Mammary epithelial cell (primary cell): ENCODE measurements at regions of chr12 and their contacts with region 1.

Region 1: GRCh38 chr12:29782285-29782870 is 1.4 kb downstream of the TMTC1 start:
- DNase-seq: peak; percentile 77
- H3K4me3 ChIP-seq: peak overlapping the region; percentile 77 to 95 (median 92)
- H3K27ac ChIP-seq: peak overlapping the region; percentile 90
- H3K4me1 ChIP-seq: peaks cover 6% of the 10 kb centered on the region
- H3K27me3 ChIP-seq: no peaks in the 10 kb centered on the region
- CTCF ChIP-seq: no peak

Region 2: DNA sequence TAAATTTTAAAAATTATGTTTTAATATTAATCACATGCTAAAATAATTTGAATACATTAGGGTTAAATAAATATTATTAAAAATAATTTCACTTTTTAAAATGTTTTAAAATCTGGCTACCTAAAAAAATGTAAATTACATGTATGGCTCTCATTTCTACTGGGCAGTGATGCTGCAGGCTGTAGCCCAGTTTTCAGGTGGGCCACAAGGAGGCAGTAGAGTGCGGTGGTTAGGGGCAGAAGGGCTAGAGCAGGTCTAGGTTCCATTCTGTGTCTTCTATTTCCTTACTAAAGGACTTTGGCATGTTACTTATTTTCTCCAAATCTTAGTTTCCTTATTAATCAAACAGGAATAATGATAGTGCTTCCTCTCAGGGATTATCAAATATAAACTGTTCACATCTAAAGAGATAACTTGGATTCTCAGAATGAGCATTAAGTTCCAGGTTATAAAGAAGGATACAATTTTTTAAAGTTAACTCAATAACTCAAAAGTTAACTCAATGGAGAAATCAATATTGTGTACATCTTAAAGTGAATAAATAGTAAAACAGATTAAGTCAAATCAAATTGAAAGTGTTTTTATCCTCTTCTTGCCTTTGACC is 230.0 kb before region 1 on chr12:
- CTCF ChIA-PET with region 1: no interaction called
- dilution Hi-C with region 1: no loop called
- in situ Hi-C with region 1: no loop called
- intact Hi-C with region 1: loop called (anchors 1 kb)
- DNase-seq: peak; percentile 30
- H3K4me3 ChIP-seq: no peak overlapping the region
- H3K27ac ChIP-seq: no peak overlapping the region
- H3K4me1 ChIP-seq: no peaks in the 10 kb centered on the region
- H3K27me3 ChIP-seq: no peaks in the 10 kb centered on the region
- CTCF ChIP-seq: peak; percentile 88 to 97

Region 3: GRCh38 chr12:29616664-29617409 is 165.5 kb before region 1 on chr12:
- CTCF ChIA-PET with region 1: interaction called, 5 read pairs
- dilution Hi-C with region 1: no loop called
- in situ Hi-C with region 1: no loop called
- intact Hi-C with region 1: loop called (anchors 5 kb)
- DNase-seq: peak; percentile 92
- H3K4me3 ChIP-seq: no peak overlapping the region
- H3K27ac ChIP-seq: peak overlapping the region; percentile 96
- H3K4me1 ChIP-seq: peaks cover 16% of the 10 kb centered on the region
- H3K27me3 ChIP-seq: no peaks in the 10 kb centered on the region
- CTCF ChIP-seq: no peak

Region 4: GRCh38 chr12:29713744-29714143 is 68.6 kb before region 1 on chr12:
- CTCF ChIA-PET with region 1: no interaction called
- dilution Hi-C with region 1: no loop called
- in situ Hi-C with region 1: no loop called
- intact Hi-C with region 1: loop called (anchors 2 kb)
- DNase-seq: peak; percentile 24
- H3K4me3 ChIP-seq: no peak overlapping the region
- H3K27ac ChIP-seq: peak overlapping the region; percentile 81
- H3K4me1 ChIP-seq: peaks cover 30% of the 10 kb centered on the region
- H3K27me3 ChIP-seq: no peaks in the 10 kb centered on the region
- CTCF ChIP-seq: no peak

Region 5: DNA sequence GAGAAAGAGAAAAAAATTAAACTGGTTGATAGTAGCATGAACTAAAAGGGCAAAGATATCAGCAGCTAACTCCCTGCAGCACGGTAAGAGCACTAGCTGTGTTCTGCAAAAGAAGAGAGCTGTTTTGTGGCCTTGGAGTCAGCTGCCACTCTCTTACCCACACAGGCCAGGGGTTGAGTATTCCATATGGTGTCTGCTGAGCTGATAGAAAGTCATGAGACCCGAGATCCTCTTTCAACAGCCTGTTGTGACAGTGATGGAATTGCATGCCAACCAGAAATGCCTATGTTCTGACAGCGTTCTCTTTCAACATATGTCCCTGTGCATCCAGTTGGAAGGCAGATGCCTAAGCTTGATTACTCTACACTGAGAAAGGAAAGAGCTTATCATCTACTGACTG is 38.6 kb before region 1 on chr12:
- CTCF ChIA-PET with region 1: no interaction called
- dilution Hi-C with region 1: no loop called
- in situ Hi-C with region 1: no loop called
- intact Hi-C with region 1: loop called (anchors 1 kb)
- DNase-seq: peak; percentile 79
- H3K4me3 ChIP-seq: no peak overlapping the region
- H3K27ac ChIP-seq: peak overlapping the region; percentile 94
- H3K4me1 ChIP-seq: peaks cover 47% of the 10 kb centered on the region
- H3K27me3 ChIP-seq: no peaks in the 10 kb centered on the region
- CTCF ChIP-seq: no peak

Region 6: DNA sequence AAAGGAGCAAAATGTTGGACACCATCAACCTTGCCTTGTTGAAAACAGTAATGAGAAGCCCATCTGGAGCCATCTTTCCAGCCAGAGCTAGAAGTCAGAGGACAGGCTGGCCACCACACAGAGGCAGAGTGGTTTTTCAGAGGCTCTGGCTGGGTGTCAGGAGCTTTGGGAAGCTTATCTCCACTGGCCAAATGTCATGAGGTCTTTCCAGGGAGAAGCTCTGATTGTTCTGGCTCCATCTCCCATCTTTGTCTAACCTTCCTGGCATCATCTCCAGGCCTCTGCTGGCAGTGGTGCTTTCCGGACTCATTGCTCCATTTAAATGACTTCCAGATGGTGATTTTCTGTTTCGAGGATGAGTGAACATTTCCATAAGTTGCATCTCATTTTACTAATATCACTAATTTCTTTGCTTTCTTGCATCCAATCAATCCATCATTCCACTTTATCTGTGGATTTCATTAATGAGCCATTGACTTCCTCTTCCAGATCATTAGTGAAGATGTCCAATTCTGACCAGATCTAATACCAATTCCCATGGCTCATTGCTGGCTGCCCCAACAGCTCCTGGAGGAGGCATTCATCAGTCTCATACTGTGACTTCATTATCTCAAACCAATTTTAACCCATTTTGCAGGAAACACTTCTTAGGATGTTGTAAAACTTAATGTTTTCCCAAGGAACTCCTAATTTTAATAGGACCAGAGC is 36.7 kb after region 1 on chr12:
- CTCF ChIA-PET with region 1: no interaction called
- dilution Hi-C with region 1: no loop called
- in situ Hi-C with region 1: no loop called
- intact Hi-C with region 1: no loop called
- DNase-seq: no peak
- H3K4me3 ChIP-seq: no peak overlapping the region
- H3K27ac ChIP-seq: no peak overlapping the region
- H3K4me1 ChIP-seq: no peaks in the 10 kb centered on the region
- H3K27me3 ChIP-seq: peaks cover 3% of the 10 kb centered on the region
- CTCF ChIP-seq: no peak

Region 7: DNA sequence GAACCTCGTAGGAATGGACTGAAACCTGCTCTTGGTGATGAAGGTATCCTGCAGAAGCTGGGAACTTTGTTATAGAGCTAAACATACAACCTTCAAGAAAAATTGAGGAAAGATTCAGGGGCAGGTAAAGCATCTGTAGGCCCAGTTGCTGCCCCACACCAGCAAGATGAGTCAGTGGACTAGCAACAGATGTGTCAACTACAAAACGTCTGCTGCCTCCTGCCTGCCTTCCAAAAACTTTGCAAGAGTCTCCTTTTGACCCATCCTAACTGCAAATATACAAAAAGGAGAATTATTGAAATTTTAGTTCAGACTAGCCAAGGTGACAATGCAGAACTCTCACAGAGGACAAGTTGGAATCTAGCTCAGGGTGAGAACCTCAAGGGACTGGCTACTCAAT is 62.3 kb after region 1 on chr12:
- CTCF ChIA-PET with region 1: no interaction called
- dilution Hi-C with region 1: no loop called
- in situ Hi-C with region 1: no loop called
- intact Hi-C with region 1: loop called (anchors 2 kb)
- DNase-seq: peak; percentile 54
- H3K4me3 ChIP-seq: no peak overlapping the region
- H3K27ac ChIP-seq: no peak overlapping the region
- H3K4me1 ChIP-seq: no peaks in the 10 kb centered on the region
- H3K27me3 ChIP-seq: peaks cover 1% of the 10 kb centered on the region
- CTCF ChIP-seq: peak in 1 of 2 donors; percentile 43

Region 8: GRCh38 chr12:29889737-29890136 is 107.4 kb after region 1 on chr12:
- CTCF ChIA-PET with region 1: no interaction called
- dilution Hi-C with region 1: no loop called
- in situ Hi-C with region 1: no loop called
- intact Hi-C with region 1: loop called (anchors 5 kb)
- DNase-seq: peak; percentile 52
- H3K4me3 ChIP-seq: no peak overlapping the region
- H3K27ac ChIP-seq: no peak overlapping the region
- H3K4me1 ChIP-seq: no peaks in the 10 kb centered on the region
- H3K27me3 ChIP-seq: no peaks in the 10 kb centered on the region
- CTCF ChIP-seq: peak; percentile 61 to 82